GM12878 (cell line): ENCODE measurements at regions of chr5 and their contacts with region 1.

Region 1: DNA sequence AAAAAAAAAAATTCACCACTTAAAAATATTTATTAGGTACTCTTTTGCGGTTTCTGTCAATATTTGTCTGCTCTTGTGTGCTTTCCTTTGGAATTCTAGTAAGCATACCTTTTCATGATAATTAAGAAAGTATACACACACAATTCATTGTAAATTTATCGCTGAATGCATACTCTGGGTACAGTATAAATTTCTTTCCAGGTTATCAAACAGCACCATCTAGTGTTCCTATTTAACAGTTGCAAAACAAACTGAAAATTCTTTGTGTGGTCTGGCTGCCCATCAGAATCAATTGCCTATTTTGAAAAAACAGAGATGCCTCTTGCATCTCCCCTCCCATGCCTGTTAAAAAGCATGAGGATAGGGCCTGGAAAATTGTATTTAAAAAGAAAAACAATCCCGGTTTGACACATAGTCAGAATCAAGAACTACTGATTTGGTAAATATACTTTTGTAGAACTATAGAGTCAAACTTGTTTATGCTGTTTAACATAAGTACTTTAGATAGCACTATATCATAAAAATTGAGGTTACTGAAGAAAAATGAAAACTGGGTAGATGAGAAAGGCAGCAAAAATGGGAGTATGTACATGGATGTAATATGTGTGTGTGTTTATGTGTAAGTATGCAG is 16.2 kb downstream of the PGGT1B start:
- DNase-seq: peak; percentile 7
- ATAC-seq: peak; percentile 85
- H3K4me3 ChIP-seq: no peak overlapping the region
- H3K27ac ChIP-seq: no peak overlapping the region
- H3K4me1 ChIP-seq: no peaks in the 10 kb centered on the region
- H3K27me3 ChIP-seq: no peaks in the 10 kb centered on the region
- CTCF ChIP-seq: peak; percentile 57 to 75 (median 64); a peak in 5 of 6 replicates
- EP300 ChIP-seq: no peak
- POLR2A ChIP-seq: no peak
- RAD21 ChIP-seq: peak; percentile 81

Region 2: DNA sequence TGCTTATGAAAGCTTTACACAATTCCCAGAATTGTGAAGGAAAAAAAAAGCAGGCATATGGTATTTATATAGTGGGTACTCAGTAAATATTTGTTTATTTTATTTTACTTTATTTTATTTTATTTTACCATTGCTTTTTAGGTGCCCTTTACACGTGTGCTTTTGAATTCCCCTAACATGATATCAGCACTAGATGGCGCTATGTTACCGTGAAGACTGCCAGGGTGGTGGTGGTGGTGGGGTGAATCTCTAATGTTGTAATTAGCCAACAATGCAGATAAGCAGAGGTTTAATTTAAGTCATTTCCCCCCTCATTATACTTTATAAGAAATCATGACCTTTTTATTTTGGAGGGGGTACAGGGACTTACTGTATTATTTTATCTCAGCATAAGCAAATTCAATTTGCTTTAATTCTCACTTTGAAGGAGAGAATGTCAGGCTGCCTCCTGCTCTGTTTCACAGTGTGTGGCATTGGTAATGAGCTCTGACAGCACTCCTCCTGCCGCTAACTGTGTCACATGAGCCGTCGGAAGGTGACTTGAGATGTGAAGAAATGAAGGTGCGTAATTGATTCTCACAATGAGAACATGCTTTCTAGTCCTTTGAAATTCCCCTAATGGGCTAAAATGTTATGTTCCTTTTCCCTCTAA is 1567.4 kb before region 1 on chr5:
- CTCF ChIA-PET with region 1: no interaction called
- POLR2A ChIA-PET with region 1: no interaction called
- RAD21 ChIA-PET with region 1: no interaction called
- SMC1A ChIA-PET with region 1: interaction called, 3 read pairs
- in situ Hi-C with region 1: no loop called
- intact Hi-C with region 1: loop called (anchors 5 kb)
- DNase-seq: peak; percentile 8
- ATAC-seq: peak; percentile 96
- H3K4me3 ChIP-seq: no peak overlapping the region
- H3K27ac ChIP-seq: no peak overlapping the region
- H3K4me1 ChIP-seq: no peaks in the 10 kb centered on the region
- H3K27me3 ChIP-seq: no peaks in the 10 kb centered on the region
- CTCF ChIP-seq: peak; percentile 66 to 83 (median 68)
- EP300 ChIP-seq: no peak
- POLR2A ChIP-seq: no peak
- RAD21 ChIP-seq: peak; percentile 97

Region 3: DNA sequence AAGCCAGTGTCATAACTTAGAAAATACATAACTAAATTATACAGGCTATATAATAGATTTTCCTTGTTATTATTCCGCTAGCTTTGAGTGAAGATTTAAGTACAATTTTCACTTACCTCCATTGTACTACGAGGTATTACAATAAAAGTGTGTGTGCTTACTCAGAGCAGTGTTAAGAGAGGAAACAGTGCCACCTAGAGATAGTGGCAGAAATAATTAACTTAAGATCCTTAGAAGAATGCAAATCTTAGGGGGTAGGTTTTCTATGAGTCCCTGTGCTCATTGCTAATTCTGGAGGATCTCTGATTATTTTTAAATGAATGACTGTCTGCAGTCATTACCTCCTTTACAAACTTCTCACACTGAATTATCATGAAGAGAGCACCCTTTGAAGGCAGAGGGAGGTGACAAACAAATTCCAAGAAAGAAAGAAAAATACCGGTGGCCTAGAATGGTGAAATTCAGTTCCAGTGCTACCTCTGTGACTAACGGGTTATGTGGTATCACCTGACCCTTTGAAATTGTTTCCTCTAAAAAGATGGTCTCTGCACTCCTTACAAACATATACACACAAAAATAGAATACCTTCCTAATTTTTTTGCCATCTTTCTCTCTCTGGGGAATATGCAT is 456.6 kb before region 1 on chr5:
- CTCF ChIA-PET with region 1: no interaction called
- POLR2A ChIA-PET with region 1: no interaction called
- RAD21 ChIA-PET with region 1: no interaction called
- SMC1A ChIA-PET with region 1: no interaction called
- in situ Hi-C with region 1: loop called (anchors 10 kb)
- intact Hi-C with region 1: no loop called
- DNase-seq: no peak
- ATAC-seq: peak; percentile 83
- H3K4me3 ChIP-seq: no peak overlapping the region
- H3K27ac ChIP-seq: no peak overlapping the region
- H3K4me1 ChIP-seq: no peaks in the 10 kb centered on the region
- H3K27me3 ChIP-seq: no peaks in the 10 kb centered on the region; a peak in 1 of 4 replicates
- CTCF ChIP-seq: peak; percentile 28 to 64 (median 53); a peak in 5 of 6 replicates
- EP300 ChIP-seq: no peak
- POLR2A ChIP-seq: no peak
- RAD21 ChIP-seq: peak; percentile 60

Region 4: DNA sequence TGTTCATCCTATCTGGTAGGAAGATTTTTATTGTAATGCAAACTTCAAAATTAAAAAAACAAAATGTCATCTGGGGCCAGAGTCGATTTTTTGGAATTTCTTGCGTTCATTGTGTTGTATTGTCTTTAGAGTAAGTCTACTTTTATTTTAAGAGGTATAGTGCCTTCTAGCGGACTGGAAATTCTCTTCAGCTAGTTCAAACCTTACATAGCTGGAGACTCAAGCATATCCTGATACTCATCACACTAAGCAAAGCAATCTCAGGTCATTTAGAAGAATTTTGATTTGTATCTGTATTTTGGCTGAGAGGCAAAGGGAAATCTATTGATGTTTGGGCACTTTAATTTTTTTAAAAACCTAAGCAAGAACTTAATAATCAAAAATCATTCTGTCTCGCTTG is 443.1 kb before region 1 on chr5:
- CTCF ChIA-PET with region 1: interaction called, 5 read pairs
- POLR2A ChIA-PET with region 1: no interaction called
- RAD21 ChIA-PET with region 1: no interaction called
- SMC1A ChIA-PET with region 1: no interaction called
- in situ Hi-C with region 1: loop called (anchors 10 kb)
- intact Hi-C with region 1: loop called (anchors 5 kb)
- DNase-seq: no peak
- ATAC-seq: peak; percentile 71
- H3K4me3 ChIP-seq: no peak overlapping the region
- H3K27ac ChIP-seq: no peak overlapping the region
- H3K4me1 ChIP-seq: no peaks in the 10 kb centered on the region
- H3K27me3 ChIP-seq: no peaks in the 10 kb centered on the region
- CTCF ChIP-seq: peak in 1 of 3 experiments; percentile 26; a peak in 1 of 6 replicates
- EP300 ChIP-seq: no peak
- POLR2A ChIP-seq: no peak
- RAD21 ChIP-seq: no peak

Region 5: DNA sequence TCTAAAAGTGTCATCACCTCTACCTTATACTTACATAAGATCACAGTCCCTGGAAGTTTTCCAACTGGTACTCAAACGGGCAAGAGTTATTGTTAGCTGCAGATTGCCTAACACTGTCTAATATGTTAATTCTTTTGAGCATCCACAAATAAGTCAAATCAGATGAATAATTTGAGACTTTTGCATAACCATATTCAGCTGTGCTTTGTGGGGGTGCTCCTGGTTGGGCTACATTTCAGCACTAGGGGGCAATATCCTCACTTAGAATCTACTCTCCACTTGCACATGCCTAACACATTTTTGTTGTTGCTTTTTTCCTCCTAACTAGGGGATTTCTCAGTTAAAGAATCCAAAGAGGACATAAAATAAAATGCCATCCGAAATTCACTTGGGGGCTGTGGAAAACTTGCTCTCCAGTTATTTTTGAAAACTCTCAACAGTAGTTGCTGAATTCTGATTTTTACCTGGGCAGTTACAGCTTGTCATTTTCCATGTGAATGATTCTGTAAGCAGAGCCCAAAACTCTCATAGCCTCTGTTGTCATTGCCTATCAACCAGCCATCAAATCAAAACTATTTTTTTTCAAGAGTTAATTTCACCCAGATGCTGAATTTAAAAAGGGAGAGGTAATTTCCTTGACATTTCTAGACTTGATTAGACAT is 148.3 kb before region 1 on chr5:
- CTCF ChIA-PET with region 1: interaction called, 72 read pairs
- POLR2A ChIA-PET with region 1: interaction called, 5 read pairs
- RAD21 ChIA-PET with region 1: interaction called, 49 read pairs
- SMC1A ChIA-PET with region 1: interaction called, 65 read pairs
- in situ Hi-C with region 1: loop called (anchors 5 kb)
- intact Hi-C with region 1: loop called (anchors 1 kb)
- DNase-seq: peak; percentile 7
- ATAC-seq: peak; percentile 97
- H3K4me3 ChIP-seq: no peak overlapping the region
- H3K27ac ChIP-seq: no peak overlapping the region
- H3K4me1 ChIP-seq: no peaks in the 10 kb centered on the region
- H3K27me3 ChIP-seq: no peaks in the 10 kb centered on the region
- CTCF ChIP-seq: peak; percentile 77 to 85 (median 78)
- EP300 ChIP-seq: no peak
- POLR2A ChIP-seq: no peak
- RAD21 ChIP-seq: peak; percentile 81

Region 6: GRCh38 chr5:115169487-115170133 is 76.9 kb before region 1 on chr5 and contains the start of gene TRIM36:
- CTCF ChIA-PET with region 1: no interaction called
- POLR2A ChIA-PET with region 1: no interaction called
- RAD21 ChIA-PET with region 1: no interaction called
- SMC1A ChIA-PET with region 1: no interaction called
- in situ Hi-C with region 1: no loop called
- intact Hi-C with region 1: loop called (anchors 5 kb)
- DNase-seq: peak; percentile 50
- ATAC-seq: peak; percentile 99
- H3K4me3 ChIP-seq: peak within 1 kb of the TSS; percentile 86
- H3K27ac ChIP-seq: no peak within 1 kb of the TSS
- H3K4me1 ChIP-seq: no peaks in the 10 kb centered on the region
- H3K27me3 ChIP-seq: peaks cover 2 to 25% of the 10 kb centered on the region in 2 experiments
- CTCF ChIP-seq: peak; percentile 13 to 36 (median 26); a peak in 4 of 6 replicates
- EP300 ChIP-seq: no peak
- POLR2A ChIP-seq: peak; percentile 48; the same call in 1 of the 2 replicates
- RAD21 ChIP-seq: no peak
- polyA plus RNA-seq, gene TRIM36: not detected

Region 7: DNA sequence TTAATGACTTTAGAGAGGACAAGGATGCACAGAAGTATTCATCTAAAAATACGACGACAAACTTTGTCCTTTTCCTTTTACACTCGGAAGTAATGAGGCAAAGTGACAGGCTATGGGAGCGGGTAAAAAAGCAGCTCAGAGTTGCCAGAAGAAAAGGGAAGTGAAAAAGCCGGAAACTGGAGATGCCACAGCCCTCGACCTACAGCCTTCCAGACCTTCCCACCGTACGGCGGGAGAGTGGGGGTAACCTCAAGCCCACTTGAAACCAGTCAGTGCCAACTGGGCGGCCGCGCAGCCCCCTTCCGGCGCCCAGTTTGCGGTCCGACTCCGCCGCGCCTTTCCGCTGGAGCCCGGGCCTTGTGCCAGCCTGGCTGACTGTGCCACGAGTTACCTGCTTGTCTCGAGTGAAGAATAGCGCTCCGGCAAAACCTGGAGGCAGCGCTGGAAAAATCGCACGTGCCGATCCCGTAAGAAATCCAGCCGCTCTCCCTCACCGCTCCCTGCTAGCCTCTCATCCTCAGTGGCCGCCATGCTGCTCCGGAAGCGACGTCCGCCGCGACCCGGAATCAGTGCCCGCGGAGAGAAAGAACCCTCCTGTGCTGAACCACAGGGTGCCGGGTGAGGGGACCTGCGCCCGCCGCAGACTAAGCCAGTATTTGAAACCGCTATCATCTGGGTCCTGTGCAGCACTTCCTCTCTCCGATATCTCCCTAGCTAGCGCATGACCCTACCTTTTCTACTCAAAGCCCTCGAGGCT is 16.0 kb after region 1 on chr5 and contains the start of gene PGGT1B:
- CTCF ChIA-PET with region 1: interaction called, 12 read pairs
- POLR2A ChIA-PET with region 1: no interaction called
- RAD21 ChIA-PET with region 1: interaction called, 7 read pairs
- SMC1A ChIA-PET with region 1: interaction called, 8 read pairs
- in situ Hi-C with region 1: no loop called
- intact Hi-C with region 1: no loop called
- DNase-seq: peak; percentile 23
- ATAC-seq: peak; percentile 95
- H3K4me3 ChIP-seq: peak within 1 kb of the TSS; percentile 84
- H3K27ac ChIP-seq: peak within 1 kb of the TSS; percentile 92
- H3K4me1 ChIP-seq: no peaks in the 10 kb centered on the region; the same call in 1 of the 2 replicates
- H3K27me3 ChIP-seq: no peaks in the 10 kb centered on the region
- CTCF ChIP-seq: no peak
- EP300 ChIP-seq: no peak
- POLR2A ChIP-seq: peak; percentile 90
- RAD21 ChIP-seq: no peak
- polyA plus RNA-seq, gene PGGT1B: 13.1 to 13.9 TPM

Region 8: GRCh38 chr5:115321309-115321708 is 74.8 kb after region 1 on chr5:
- CTCF ChIA-PET with region 1: no interaction called
- POLR2A ChIA-PET with region 1: no interaction called
- RAD21 ChIA-PET with region 1: no interaction called
- SMC1A ChIA-PET with region 1: no interaction called
- in situ Hi-C with region 1: no loop called
- intact Hi-C with region 1: no loop called
- DNase-seq: no peak
- ATAC-seq: no peak
- H3K4me3 ChIP-seq: no peak overlapping the region
- H3K27ac ChIP-seq: no peak overlapping the region
- H3K4me1 ChIP-seq: no peaks in the 10 kb centered on the region
- H3K27me3 ChIP-seq: no peaks in the 10 kb centered on the region
- CTCF ChIP-seq: no peak
- EP300 ChIP-seq: no peak
- POLR2A ChIP-seq: no peak
- RAD21 ChIP-seq: no peak

Region 9: GRCh38 chr5:115616472-115616871 is 370.0 kb after region 1 on chr5:
- CTCF ChIA-PET with region 1: no interaction called
- POLR2A ChIA-PET with region 1: no interaction called
- RAD21 ChIA-PET with region 1: no interaction called
- SMC1A ChIA-PET with region 1: no interaction called
- in situ Hi-C with region 1: no loop called
- intact Hi-C with region 1: no loop called
- DNase-seq: no peak
- ATAC-seq: peak; percentile 35
- H3K4me3 ChIP-seq: no peak overlapping the region
- H3K27ac ChIP-seq: no peak overlapping the region
- H3K4me1 ChIP-seq: no peaks in the 10 kb centered on the region
- H3K27me3 ChIP-seq: no peaks in the 10 kb centered on the region
- CTCF ChIP-seq: no peak
- EP300 ChIP-seq: no peak
- POLR2A ChIP-seq: no peak
- RAD21 ChIP-seq: no peak